ENCODE measurements at regions of chr18 and their contacts with region 1.

Region 1: GRCh38 chr18:49510393-49511115 is 23.5 kb upstream of the C18orf32 start:
- DNase-seq: peak; percentile 32
- ATAC-seq: peak; percentile 67
- H3K4me3 Mint-ChIP-seq: no peak overlapping the region
- H3K27ac Mint-ChIP-seq: no peak overlapping the region
- H3K4me1 Mint-ChIP-seq: no peaks in the 10 kb centered on the region
- H3K27me3 Mint-ChIP-seq: peaks cover 18% of the 10 kb centered on the region
- CTCF ChIP-seq: no peak

Region 2: GRCh38 chr18:48475635-48476549 is 1034.7 kb before region 1 on chr18:
- CTCF ChIA-PET with region 1: no interaction called
- POLR2A ChIA-PET with region 1: no interaction called
- intact Hi-C with region 1: loop called (anchors 5 kb)
- DNase-seq: no peak
- ATAC-seq: peak; percentile 37
- H3K4me3 Mint-ChIP-seq: no peak overlapping the region
- H3K27ac Mint-ChIP-seq: no peak overlapping the region
- H3K4me1 Mint-ChIP-seq: no peaks in the 10 kb centered on the region
- H3K27me3 Mint-ChIP-seq: peaks cover 23% of the 10 kb centered on the region
- CTCF ChIP-seq: peak; percentile 30

Region 3: GRCh38 chr18:49858309-49859020 is 347.9 kb after region 1 on chr18:
- CTCF ChIA-PET with region 1: interaction called, 51 read pairs
- POLR2A ChIA-PET with region 1: no interaction called
- intact Hi-C with region 1: loop called (anchors 1 kb)
- DNase-seq: no peak
- ATAC-seq: no peak
- H3K4me3 Mint-ChIP-seq: no peak overlapping the region
- H3K27ac Mint-ChIP-seq: no peak overlapping the region
- H3K4me1 Mint-ChIP-seq: no peaks in the 10 kb centered on the region
- H3K27me3 Mint-ChIP-seq: no peaks in the 10 kb centered on the region
- CTCF ChIP-seq: no peak

Region 4: DNA sequence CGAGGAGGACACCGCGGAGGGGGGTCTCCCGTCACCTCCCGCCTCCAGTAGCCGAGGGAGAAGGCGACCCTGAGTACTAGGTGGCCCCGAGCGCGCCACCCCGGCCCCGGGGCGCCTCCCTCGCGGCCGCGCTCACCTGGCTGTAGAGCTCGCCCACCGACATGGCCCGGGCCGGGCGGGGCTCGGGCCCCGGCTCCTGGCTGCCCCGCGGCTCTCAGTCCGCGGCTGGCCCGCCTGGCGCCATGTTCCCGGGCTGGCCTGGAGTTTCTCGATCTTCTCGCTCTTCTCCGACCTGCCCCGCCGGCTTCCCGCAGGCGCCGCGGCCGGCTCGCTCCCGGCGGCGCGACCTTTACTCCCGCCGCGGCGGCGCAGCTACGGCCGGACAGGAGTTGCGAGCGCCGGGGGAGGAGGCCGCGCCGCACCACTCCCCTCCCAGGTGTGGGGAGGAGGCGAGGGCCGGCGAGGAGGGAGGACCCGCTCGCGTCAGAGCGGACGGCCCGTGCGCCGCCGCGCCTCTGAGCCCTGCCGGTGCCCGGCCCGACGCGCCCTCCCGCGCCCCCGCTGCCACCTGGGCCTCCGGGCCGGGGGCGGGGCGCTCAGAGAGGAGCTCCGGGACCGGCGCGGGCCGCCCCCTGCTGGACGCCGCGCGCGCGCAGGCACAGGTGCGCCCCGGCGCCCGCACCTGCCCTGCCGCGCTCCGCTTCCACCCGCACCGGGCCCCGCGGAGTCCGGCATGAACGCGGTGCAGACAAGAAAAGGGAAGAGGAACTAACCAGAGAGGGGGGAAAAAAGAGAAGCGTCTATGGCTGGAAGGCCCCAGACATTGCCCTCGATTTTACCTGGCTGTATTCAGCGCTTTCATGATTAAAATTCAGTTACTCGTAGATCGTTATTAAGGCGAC is 684.3 kb after region 1 on chr18 and contains the start of gene MYO5B:
- CTCF ChIA-PET with region 1: interaction called, 6 read pairs
- POLR2A ChIA-PET with region 1: no interaction called
- intact Hi-C with region 1: loop called (anchors 2 kb)
- DNase-seq: peak; percentile 57
- ATAC-seq: peak; percentile 87
- H3K4me3 Mint-ChIP-seq: peak within 1 kb of the TSS; percentile 33
- H3K27ac Mint-ChIP-seq: no peak within 1 kb of the TSS
- H3K4me1 Mint-ChIP-seq: peaks cover 12% of the 10 kb centered on the region
- H3K27me3 Mint-ChIP-seq: peaks cover 53% of the 10 kb centered on the region
- CTCF ChIP-seq: no peak
- total RNA-seq, gene MYO5B: 0.49 and 0.51 TPM in 2 replicates

Region 5: DNA sequence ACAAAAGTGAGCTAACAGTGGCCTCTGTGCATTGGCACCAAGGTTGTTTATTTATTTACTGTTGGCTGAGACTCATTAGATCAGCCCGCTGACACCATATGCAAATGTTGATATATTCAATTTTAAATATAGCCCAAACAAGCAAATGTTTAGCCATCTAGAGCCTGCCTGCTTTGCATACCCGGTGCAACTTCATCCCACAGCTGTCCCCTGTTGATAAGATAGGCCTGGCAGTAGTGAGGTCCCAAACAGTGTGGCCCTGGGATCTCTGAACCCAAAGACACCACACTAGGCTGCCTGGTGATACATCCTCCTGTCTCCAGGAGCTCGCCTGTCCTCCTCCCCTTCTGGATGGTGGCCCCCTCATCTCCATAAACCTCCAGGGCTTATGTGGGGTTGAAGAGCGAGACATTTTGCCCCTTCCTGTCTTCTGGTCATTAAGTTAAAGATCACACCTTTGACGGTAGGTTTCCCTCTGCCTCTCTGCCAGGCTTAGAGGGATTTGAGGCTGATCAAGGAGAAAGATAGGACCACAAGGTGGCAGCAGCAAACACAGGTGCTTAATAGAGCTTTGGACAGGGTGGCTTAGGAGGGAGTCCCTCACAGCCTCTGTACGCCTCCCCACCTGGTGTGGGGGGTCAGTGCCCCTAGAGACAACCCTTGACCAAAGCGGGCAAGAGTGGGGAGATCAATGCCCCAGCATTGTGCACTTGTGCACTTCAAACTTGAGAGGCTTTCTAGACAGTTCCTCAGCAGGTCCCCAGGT is 708.1 kb after region 1 on chr18:
- CTCF ChIA-PET with region 1: interaction called, 3 read pairs
- POLR2A ChIA-PET with region 1: no interaction called
- intact Hi-C with region 1: loop called (anchors 1 kb)
- DNase-seq: peak; percentile 16
- ATAC-seq: peak; percentile 60
- H3K4me3 Mint-ChIP-seq: no peak overlapping the region
- H3K27ac Mint-ChIP-seq: no peak overlapping the region
- H3K4me1 Mint-ChIP-seq: peaks cover 4% of the 10 kb centered on the region
- H3K27me3 Mint-ChIP-seq: peaks cover 25% of the 10 kb centered on the region
- CTCF ChIP-seq: no peak

Region 6: GRCh38 chr18:50429207-50429948 is 918.8 kb after region 1 on chr18:
- CTCF ChIA-PET with region 1: interaction called, 13 read pairs
- POLR2A ChIA-PET with region 1: interaction called, 3 read pairs
- intact Hi-C with region 1: loop called (anchors 1 kb)
- DNase-seq: no peak
- ATAC-seq: no peak
- H3K4me3 Mint-ChIP-seq: no peak overlapping the region
- H3K27ac Mint-ChIP-seq: no peak overlapping the region
- H3K4me1 Mint-ChIP-seq: no peaks in the 10 kb centered on the region
- H3K27me3 Mint-ChIP-seq: peaks cover 5% of the 10 kb centered on the region
- CTCF ChIP-seq: no peak

Measured in activated B cell treated with CpG ODN at 0.5 μM for 24 hours (primary cell).